ENCODE measurements at regions of chr1 and their contacts with region 1.

Region 1: GRCh38 chr1:117137316-117137855 is 15.8 kb upstream of the TRIM45 start:
- DNase-seq: no peak
- H3K4me3 ChIP-seq: no peak overlapping the region
- H3K27ac ChIP-seq: no peak overlapping the region
- H3K4me1 ChIP-seq: no peaks in the 10 kb centered on the region
- H3K27me3 ChIP-seq: no peaks in the 10 kb centered on the region
- CTCF ChIP-seq: no peak
- POLR2A ChIP-seq: no peak

Region 2: GRCh38 chr1:116724765-116725375 is 412.5 kb before region 1 on chr1:
- intact Hi-C with region 1: loop called (anchors 10 kb)
- DNase-seq: peak; percentile 51
- H3K4me3 ChIP-seq: no peak overlapping the region
- H3K27ac ChIP-seq: no peak overlapping the region
- H3K4me1 ChIP-seq: no peaks in the 10 kb centered on the region
- H3K27me3 ChIP-seq: no peaks in the 10 kb centered on the region
- CTCF ChIP-seq: peak in 3 of 4 experiments; percentile 46 to 68 (median 54)
- POLR2A ChIP-seq: no peak

Region 3: GRCh38 chr1:117026361-117026760 is 111.0 kb before region 1 on chr1:
- intact Hi-C with region 1: no loop called
- DNase-seq: no peak
- H3K4me3 ChIP-seq: no peak overlapping the region
- H3K27ac ChIP-seq: peak overlapping the region in 1 of 2 donors; percentile 29
- H3K4me1 ChIP-seq: no peaks in the 10 kb centered on the region
- H3K27me3 ChIP-seq: no peaks in the 10 kb centered on the region
- CTCF ChIP-seq: no peak
- POLR2A ChIP-seq: no peak

Measured in prostate gland (tissue), 2 donors.